Activated CD8-positive, alpha-beta T cell treated with anti-CD3 and anti-CD28 coated beads, Interleukin-2, amount 10 ng/mL, durations not matched to agents 7 days and 5 days (primary cell): ENCODE measurements at regions of chr5 and their contacts with region 1.

Region 1: DNA sequence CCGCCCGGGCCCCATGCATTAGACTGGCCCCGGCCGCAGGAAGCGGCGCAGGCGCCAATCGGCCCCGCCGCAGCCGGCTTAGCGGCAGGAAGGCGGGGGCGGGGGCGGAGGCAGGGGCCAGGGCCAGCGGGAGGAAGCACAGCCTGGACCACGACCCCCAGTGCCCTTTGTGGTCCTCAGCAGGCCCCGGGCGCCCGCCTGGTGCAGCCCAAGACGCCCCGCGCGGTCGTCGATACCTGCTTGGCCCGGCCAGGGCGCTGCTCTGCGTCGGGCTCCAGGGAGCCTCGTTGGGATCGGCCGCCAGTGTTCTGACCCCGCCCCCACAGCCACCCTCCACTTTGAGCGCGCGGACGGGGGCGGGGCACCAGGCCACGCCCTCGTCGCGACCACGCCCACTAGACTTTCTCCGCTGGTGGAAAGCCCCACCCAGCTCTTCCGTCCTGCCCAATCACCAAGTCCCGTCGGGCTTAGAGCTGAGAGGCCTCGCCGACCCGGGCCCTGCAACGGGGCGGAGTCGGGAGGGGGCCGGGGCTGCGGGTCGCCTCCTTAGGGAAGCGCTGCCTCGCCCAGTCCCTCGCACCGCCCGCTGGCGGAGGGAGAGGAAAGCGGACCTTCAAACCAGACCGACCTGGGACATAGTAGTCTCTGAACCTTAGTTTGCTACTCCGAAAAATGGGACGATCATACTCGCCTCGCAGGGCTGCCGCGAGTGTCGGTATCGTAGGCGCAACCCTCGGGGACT is at the start of gene PDLIM7:
- DNase-seq: peak; percentile 97
- ATAC-seq: peak; percentile 91
- H3K4me3 Mint-ChIP-seq: peak within 1 kb of the TSS; percentile 82
- H3K27ac Mint-ChIP-seq: peak within 1 kb of the TSS; percentile 67
- H3K4me1 Mint-ChIP-seq: peaks cover 61% of the 10 kb centered on the region
- H3K27me3 Mint-ChIP-seq: peaks cover 18% of the 10 kb centered on the region
- total RNA-seq, gene PDLIM7: 62.5 to 67.3 TPM

Region 2: DNA sequence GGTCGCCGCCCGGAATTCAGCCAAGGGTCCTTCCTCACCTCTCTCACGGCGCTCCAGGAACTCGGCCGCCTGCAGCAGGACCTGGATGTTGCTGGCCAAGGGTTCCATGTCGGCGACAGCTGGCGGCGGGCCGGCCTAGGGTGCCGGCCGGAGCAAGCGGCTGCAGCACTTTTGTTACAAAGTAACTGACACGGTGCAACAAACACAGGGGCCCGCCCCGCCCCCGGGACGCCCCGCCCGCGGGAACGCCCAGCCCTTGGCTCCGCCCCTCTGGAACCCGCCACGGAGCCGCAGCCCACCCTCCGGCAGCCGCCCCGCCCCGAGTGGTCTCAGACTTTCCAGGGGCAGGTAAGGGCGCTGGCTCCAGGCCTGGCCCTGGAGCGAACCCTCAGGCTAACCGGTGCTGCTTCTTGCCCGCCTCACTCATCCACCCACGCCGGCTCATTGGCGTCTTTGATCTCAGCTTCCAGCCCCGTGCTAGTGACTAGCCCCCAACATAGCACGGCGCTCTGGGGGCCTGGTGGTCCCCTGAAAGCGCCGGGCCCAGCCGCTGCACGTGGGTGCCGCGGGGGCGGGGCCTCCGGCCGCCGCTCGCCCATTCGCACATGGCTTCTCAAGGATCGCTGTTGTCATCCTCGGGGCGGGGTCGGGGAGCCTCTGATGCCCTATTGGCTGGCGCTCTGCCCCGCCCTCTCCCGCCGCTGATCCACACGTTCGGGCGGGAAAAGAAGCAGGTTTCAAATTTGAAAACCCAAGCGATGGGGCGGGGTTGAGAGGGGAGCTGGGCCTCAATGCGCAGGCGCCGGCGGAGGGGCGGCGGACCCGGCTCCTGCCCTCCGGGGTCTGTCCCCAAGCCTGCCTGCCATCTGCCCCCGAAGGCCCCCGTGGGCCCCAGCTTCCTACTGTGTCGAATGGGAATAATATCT is 185.5 kb before region 1 on chr5 and contains the start of gene MXD3:
- CTCF ChIA-PET with region 1: interaction called, 20 read pairs
- POLR2A ChIA-PET with region 1: no interaction called
- DNase-seq: peak; percentile 99
- ATAC-seq: peak; percentile 87
- H3K4me3 Mint-ChIP-seq: peak within 1 kb of the TSS; percentile 95
- H3K27ac Mint-ChIP-seq: peak within 1 kb of the TSS; percentile 93
- H3K4me1 Mint-ChIP-seq: peaks cover 55% of the 10 kb centered on the region
- H3K27me3 Mint-ChIP-seq: no peaks in the 10 kb centered on the region
- total RNA-seq, gene MXD3: 93.2 to 96.9 TPM

Region 3: GRCh38 chr5:177370488-177371119 is 126.9 kb before region 1 on chr5:
- CTCF ChIA-PET with region 1: interaction called, 12 read pairs
- POLR2A ChIA-PET with region 1: no interaction called
- DNase-seq: peak; percentile 63
- ATAC-seq: peak; percentile 62
- H3K4me3 Mint-ChIP-seq: peak overlapping the region; percentile 31
- H3K27ac Mint-ChIP-seq: no peak overlapping the region
- H3K4me1 Mint-ChIP-seq: peaks cover 70% of the 10 kb centered on the region
- H3K27me3 Mint-ChIP-seq: no peaks in the 10 kb centered on the region

Region 4: DNA sequence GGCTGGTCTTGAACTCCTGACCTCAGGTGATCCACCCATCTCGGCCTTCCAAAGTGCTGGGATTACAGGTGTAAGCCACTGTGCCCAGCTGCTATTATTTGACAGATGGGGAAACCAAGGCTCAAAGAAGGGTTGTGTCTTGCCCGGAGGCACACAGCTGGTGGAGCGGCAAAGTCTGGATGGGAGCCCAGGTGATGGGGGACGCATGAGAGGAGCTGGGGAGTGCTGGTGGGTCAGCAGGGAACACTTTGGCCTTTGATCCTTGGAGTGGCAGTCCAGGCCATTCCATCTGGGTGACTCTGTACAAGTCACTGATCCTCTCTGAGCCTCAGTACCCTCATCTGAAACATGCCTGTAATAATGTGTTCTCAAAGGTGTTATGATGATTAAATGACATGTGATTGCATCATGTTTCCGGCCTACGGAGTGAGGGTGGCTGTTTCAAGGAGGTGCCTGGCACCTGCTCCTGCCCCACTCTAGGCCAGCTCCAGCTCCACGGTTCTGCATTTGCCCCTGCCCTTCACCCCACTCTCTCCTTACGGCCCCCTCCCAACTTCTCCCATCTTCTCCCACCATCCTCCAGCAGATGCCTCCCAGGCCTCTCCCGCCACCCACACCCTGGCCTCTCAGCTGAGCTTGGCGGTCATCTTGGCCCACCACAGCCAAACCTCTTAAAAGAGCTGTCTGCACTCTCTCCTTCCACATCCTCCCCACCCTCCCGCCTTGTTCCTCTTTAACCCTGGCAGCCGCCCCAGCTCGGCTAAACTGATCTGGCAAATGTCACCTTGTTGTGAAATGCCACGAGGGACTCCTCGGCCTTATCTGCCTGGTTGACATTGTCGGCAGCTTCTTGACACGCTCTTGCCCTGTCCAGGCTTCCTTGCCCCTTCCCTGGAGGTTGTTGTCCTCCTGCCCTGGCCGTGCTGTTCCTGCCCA is 18.5 kb before region 1 on chr5:
- CTCF ChIA-PET with region 1: interaction called, 14 read pairs
- POLR2A ChIA-PET with region 1: interaction called, 12 read pairs
- DNase-seq: peak; percentile 77
- ATAC-seq: peak; percentile 83
- H3K4me3 Mint-ChIP-seq: peak overlapping the region; percentile 39
- H3K27ac Mint-ChIP-seq: peak overlapping the region; percentile 92
- H3K4me1 Mint-ChIP-seq: peaks cover 60% of the 10 kb centered on the region
- H3K27me3 Mint-ChIP-seq: peaks cover 3% of the 10 kb centered on the region

Region 5: GRCh38 chr5:177516604-177517568 is 19.4 kb after region 1 on chr5 and contains the start of gene DDX41:
- CTCF ChIA-PET with region 1: interaction called, 23 read pairs
- POLR2A ChIA-PET with region 1: no interaction called
- DNase-seq: peak; percentile 98
- ATAC-seq: peak; percentile 94
- H3K4me3 Mint-ChIP-seq: peak within 1 kb of the TSS; percentile 89
- H3K27ac Mint-ChIP-seq: peak within 1 kb of the TSS; percentile 86
- H3K4me1 Mint-ChIP-seq: peaks cover 55% of the 10 kb centered on the region
- H3K27me3 Mint-ChIP-seq: no peaks in the 10 kb centered on the region
- total RNA-seq, gene DDX41: 135 to 149 TPM